ENCODE measurements at regions of chr7 and their contacts with region 1.

Region 1: DNA sequence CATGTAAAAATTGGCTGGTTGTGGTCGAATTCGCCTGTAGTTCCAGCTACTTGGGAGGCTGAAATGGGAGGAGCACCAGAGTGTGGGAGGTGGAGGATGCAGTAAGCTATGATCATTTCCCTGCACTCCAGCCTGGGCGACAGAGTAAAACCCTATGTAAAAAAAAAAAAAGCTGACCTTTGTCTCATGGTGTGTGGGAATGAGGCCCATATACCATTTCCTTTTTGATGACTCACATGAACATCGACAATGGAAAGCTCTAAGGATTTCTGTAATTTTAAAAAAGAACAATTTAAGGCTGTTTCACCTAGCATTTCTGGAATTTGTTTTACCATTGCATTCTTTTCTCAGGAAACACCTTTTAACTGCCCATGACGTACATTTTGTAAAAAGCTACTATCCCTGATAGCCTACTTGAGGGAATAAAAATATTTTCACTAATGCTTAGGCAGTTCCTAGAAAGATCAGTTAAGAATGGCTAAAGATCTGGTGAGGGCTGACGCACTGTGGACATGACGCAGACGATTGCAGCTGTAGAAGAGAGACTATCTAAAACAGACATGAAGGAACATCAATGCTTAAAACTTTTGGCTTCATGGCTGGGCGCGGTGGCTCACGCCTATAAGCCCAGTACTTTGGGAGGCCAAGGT is 400.6 kb upstream of the IGFBP3 start:
- DNase-seq: no peak
- H3K4me3 ChIP-seq: no peak overlapping the region
- H3K27ac ChIP-seq: no peak overlapping the region
- H3K27me3 ChIP-seq: no peaks in the 10 kb centered on the region
- CTCF ChIP-seq: no peak

Region 2: DNA sequence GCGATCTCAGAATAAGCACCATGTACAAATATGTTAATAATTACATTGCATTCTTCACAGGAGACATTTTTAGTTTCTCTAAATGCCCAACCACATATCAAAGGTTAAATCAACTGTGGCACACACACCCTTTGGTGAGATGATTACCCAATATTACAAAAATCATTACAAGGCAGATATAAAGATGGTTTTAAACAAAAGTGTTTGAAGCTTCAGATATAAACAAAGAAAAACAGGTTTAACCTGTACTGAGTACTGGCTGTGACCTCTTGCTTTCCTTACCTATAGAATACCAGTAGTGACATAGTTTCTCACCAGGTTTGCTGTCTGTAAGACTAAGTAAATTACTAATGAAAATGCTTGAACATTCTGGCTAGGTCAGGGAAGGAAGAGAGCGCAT is 40.6 kb before region 1 on chr7:
- CTCF ChIA-PET with region 1: interaction called, 3 read pairs
- POLR2A ChIA-PET with region 1: interaction called, 16 read pairs
- DNase-seq: no peak
- H3K4me3 ChIP-seq: no peak overlapping the region
- H3K27ac ChIP-seq: no peak overlapping the region
- H3K27me3 ChIP-seq: no peaks in the 10 kb centered on the region
- CTCF ChIP-seq: no peak